ENCODE measurements at regions of chr3 and their contacts with region 1.

Region 1: GRCh38 chr3:13452490-13453335 is 27.4 kb upstream of the HDAC11 start:
- DNase-seq: peak in 8 of 9 experiments; percentile 7 to 77 (median 50)
- ATAC-seq: peak; percentile 19
- H3K4me3 ChIP-seq: peak overlapping the region; percentile 6 to 69
- H3K4me3 Mint-ChIP-seq: peak overlapping the region; percentile 96
- H3K27ac ChIP-seq: peak overlapping the region; percentile 28 to 73
- H3K27ac Mint-ChIP-seq: peak overlapping the region; percentile 95
- H3K4me1 ChIP-seq: peaks cover 18% of the 10 kb centered on the region
- H3K4me1 Mint-ChIP-seq: peaks cover 19% of the 10 kb centered on the region
- H3K27me3 ChIP-seq: no peaks in the 10 kb centered on the region
- H3K27me3 Mint-ChIP-seq: no peaks in the 10 kb centered on the region
- CTCF ChIP-seq: peak; percentile 83

Region 2: DNA sequence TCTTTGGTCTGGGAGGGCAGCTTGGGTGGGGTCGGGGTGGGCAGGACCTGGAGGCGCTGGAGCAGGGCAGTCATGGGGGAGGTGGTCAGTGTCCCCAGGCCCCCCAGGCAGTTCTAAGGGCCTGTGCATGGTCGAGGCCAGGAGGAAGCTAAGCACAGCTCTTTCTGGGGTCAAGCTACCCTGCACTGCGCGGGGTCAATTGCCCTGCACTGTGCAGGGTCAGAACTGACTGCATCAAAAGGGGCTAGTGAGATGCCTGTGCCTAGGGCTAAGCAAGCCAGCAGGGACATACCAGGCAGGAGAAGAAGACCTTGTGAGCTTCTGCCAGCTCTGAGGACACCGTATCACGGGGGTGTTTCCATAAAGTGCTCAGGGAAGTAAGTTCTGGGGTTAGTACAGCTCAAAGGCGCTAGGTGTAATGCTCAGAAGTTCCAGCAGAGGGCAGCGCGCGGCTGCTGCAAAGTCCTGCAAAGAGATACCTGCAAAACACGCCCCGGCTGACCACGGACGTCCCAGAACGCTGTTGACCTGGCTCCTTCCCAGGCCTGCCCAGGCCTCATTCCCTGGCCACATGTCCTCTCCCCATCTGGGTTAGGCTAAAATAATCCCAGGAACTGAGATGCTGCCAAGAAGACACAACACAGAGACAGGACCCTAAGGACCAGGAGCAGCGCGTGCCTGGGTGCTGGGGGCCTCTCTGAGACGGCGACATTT is 360.7 kb before region 1 on chr3:
- CTCF ChIA-PET with region 1: interaction called, 44 read pairs
- POLR2A ChIA-PET with region 1: no interaction called
- intact Hi-C with region 1: loop called in 1 of 2 experiments (anchors 1 kb)
- DNase-seq: peak; percentile 66 to 91 (median 82)
- ATAC-seq: peak; percentile 94
- H3K4me3 ChIP-seq: no peak overlapping the region
- H3K4me3 Mint-ChIP-seq: no peak overlapping the region
- H3K27ac ChIP-seq: no peak overlapping the region
- H3K27ac Mint-ChIP-seq: peak overlapping the region; percentile 5
- H3K4me1 ChIP-seq: peaks cover 6% of the 10 kb centered on the region
- H3K4me1 Mint-ChIP-seq: peaks cover 4% of the 10 kb centered on the region
- H3K27me3 ChIP-seq: no peaks in the 10 kb centered on the region
- H3K27me3 Mint-ChIP-seq: peaks cover 15% of the 10 kb centered on the region
- CTCF ChIP-seq: peak; percentile 93

Region 3: DNA sequence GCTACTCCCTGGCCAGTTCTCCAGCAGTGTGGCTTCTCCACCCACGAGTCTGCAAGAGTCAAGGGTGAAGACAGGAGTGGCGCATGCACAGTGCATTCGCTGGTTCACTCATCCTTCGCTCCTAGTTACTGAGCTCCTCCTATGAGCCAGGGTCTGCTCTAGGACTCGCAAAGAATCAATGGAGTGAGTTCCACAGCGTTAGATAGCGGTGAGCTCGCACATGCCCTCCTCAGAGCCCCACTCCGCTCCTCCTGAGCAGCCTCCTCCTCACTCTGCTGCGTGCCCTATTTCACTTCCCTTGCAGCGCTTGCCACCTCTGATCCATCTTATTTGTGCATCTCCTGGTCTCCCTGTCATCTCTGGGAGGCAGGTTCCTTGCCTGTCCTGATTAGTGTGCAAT is 95.6 kb before region 1 on chr3:
- CTCF ChIA-PET with region 1: interaction called, 17 read pairs
- POLR2A ChIA-PET with region 1: interaction called, 3 read pairs
- intact Hi-C with region 1: no loop called
- DNase-seq: no peak
- ATAC-seq: no peak
- H3K4me3 ChIP-seq: no peak overlapping the region
- H3K4me3 Mint-ChIP-seq: no peak overlapping the region
- H3K27ac ChIP-seq: no peak overlapping the region
- H3K27ac Mint-ChIP-seq: no peak overlapping the region
- H3K4me1 ChIP-seq: no peaks in the 10 kb centered on the region
- H3K4me1 Mint-ChIP-seq: peaks cover 8% of the 10 kb centered on the region
- H3K27me3 ChIP-seq: no peaks in the 10 kb centered on the region
- H3K27me3 Mint-ChIP-seq: no peaks in the 10 kb centered on the region
- CTCF ChIP-seq: no peak

Region 4: GRCh38 chr3:13397316-13397715 is 55.4 kb before region 1 on chr3:
- CTCF ChIA-PET with region 1: interaction called, 100 read pairs
- POLR2A ChIA-PET with region 1: interaction called, 13 read pairs
- intact Hi-C with region 1: no loop called
- DNase-seq: no peak
- ATAC-seq: no peak
- H3K4me3 ChIP-seq: no peak overlapping the region
- H3K4me3 Mint-ChIP-seq: no peak overlapping the region
- H3K27ac ChIP-seq: no peak overlapping the region
- H3K27ac Mint-ChIP-seq: no peak overlapping the region
- H3K4me1 ChIP-seq: peaks cover 7% of the 10 kb centered on the region
- H3K4me1 Mint-ChIP-seq: peaks cover 18% of the 10 kb centered on the region
- H3K27me3 ChIP-seq: no peaks in the 10 kb centered on the region
- H3K27me3 Mint-ChIP-seq: no peaks in the 10 kb centered on the region
- CTCF ChIP-seq: no peak

Region 5: DNA sequence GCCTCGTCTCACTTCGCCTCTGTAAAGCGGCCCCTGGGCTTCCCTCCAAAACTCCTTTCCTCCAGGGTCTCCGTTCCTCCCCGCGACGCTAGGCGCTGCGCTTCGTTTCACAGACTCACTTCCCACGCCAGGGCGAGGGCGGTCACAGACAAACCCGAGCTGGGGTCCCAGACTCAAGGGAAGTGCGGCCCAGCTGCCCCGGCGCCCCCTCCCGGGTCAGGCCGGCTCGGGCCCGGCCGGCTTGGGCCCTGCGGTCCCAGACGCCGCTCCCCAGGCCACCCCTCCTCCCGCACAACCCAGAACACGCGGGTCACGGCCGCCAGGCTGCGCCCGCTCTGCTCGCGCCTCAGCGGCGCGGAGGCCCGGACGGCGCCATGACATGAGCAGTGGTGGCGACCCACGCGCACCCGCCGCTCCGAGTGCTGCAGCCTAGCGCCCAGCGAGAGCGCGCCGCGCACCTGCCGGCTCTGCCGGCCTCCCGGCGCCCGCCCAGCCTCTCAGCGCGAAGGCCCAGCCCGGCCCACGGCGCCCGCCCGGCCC is 33.1 kb before region 1 on chr3:
- CTCF ChIA-PET with region 1: interaction called, 117 read pairs
- POLR2A ChIA-PET with region 1: interaction called, 47 read pairs
- intact Hi-C with region 1: loop called (anchors 1 kb)
- DNase-seq: peak; percentile 40 to 83 (median 66)
- ATAC-seq: peak; percentile 29
- H3K4me3 ChIP-seq: peak overlapping the region; percentile 72 to 82
- H3K4me3 Mint-ChIP-seq: peak overlapping the region; percentile 91
- H3K27ac ChIP-seq: peak overlapping the region; percentile 74 to 89
- H3K27ac Mint-ChIP-seq: peak overlapping the region; percentile 96
- H3K4me1 ChIP-seq: peaks cover 57% of the 10 kb centered on the region
- H3K4me1 Mint-ChIP-seq: peaks cover 76% of the 10 kb centered on the region
- H3K27me3 ChIP-seq: no peaks in the 10 kb centered on the region
- H3K27me3 Mint-ChIP-seq: no peaks in the 10 kb centered on the region
- CTCF ChIP-seq: no peak